H1 (cell line): ENCODE measurements at regions of chr16 and their contacts with region 1.

Region 1: GRCh38 chr16:83842756-83843507 is 35.2 kb downstream of the HSBP1 start:
- DNase-seq: no peak
- H3K4me3 ChIP-seq: no peak overlapping the region
- H3K27ac ChIP-seq: 0 out of 2 replicates have a peak overlapping the region, but pooled peaks have one; percentile 6
- H3K4me1 ChIP-seq: peaks cover 15 to 30% (median 23%) of the 10 kb centered on the region in 4 experiments
- H3K27me3 ChIP-seq: no peaks in the 10 kb centered on the region
- CTCF ChIP-seq: no peak
- EP300 ChIP-seq: no peak
- POLR2A ChIP-seq: no peak
- RAD21 ChIP-seq: no peak

Region 2: GRCh38 chr16:83887081-83887480 is 44.1 kb after region 1 on chr16:
- CTCF ChIA-PET with region 1: interaction called, 11 read pairs
- POLR2A ChIA-PET with region 1: interaction called, 6 read pairs
- DNase-seq: no peak
- H3K4me3 ChIP-seq: no peak overlapping the region
- H3K27ac ChIP-seq: no peak overlapping the region
- H3K4me1 ChIP-seq: peaks cover 0 to 3% (median 0%) of the 10 kb centered on the region in 4 experiments; a peak in 1 of 7 replicates
- H3K27me3 ChIP-seq: no peaks in the 10 kb centered on the region
- CTCF ChIP-seq: peak; percentile 18 to 50 (median 43)
- EP300 ChIP-seq: no peak
- POLR2A ChIP-seq: no peak
- RAD21 ChIP-seq: peak; percentile 59 to 67

Region 3: DNA sequence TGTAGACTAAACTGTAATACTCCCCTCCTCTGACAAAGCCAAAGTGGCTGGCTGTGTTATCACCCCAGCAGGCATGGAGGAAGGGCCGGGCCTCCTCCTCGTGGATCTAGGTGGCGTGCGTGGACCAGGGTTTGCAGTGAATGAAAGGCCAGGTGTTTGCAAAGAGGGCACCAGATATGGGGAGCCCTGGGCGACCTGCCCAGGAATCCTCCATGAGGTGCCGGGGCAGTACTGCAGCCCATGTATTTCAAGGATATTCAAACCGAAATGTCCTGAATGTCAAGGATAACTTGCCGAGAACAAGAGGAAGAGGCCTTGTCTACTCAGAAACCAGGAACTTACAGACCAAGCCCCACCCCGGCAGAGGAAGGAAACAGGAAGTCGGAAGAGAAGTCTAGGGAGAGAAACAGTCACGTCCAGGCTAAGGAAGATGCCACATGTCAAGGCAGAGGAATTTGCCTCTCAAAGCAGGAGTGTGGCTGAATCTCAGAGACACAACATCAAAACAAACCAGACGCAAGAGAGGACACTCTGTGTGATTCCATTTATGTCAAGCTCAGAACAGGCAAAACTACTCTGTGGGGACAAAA is 96.4 kb after region 1 on chr16:
- CTCF ChIA-PET with region 1: no interaction called
- POLR2A ChIA-PET with region 1: no interaction called
- DNase-seq: no peak
- H3K4me3 ChIP-seq: no peak overlapping the region
- H3K27ac ChIP-seq: no peak overlapping the region
- H3K4me1 ChIP-seq: peaks cover 0 to 5% (median 3%) of the 10 kb centered on the region in 4 experiments; a peak in 3 of 7 replicates
- H3K27me3 ChIP-seq: no peaks in the 10 kb centered on the region; a peak in 2 of 7 replicates
- CTCF ChIP-seq: no peak
- EP300 ChIP-seq: no peak
- POLR2A ChIP-seq: no peak
- RAD21 ChIP-seq: no peak